ENCODE measurements at regions of chr11 and their contacts with region 1.

Region 1: DNA sequence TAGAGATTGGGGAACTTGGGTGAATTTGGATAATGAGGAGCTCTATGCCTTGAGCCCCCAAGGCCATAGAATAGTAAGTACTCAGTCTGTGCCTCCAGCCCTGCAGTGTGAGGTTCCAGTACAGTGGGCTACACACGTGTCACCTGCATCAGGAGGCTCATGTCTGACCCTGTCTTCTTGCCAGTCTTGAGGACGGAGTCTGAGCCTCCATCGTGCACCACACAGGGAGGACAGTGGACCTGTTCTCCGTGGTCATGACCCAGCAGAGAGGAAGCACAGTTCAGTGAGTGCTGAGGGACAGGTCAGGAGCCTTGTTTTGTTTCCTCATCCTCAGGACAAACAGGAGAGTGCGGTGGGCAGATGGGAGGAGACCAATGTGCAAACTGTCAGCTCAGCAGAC is 30.8 kb downstream of the RPS13 start:
- DNase-seq: no peak
- H3K4me3 ChIP-seq: no peak overlapping the region
- H3K27ac ChIP-seq: no peak overlapping the region
- H3K4me1 ChIP-seq: no peaks in the 10 kb centered on the region
- H3K27me3 ChIP-seq: peaks cover 4% of the 10 kb centered on the region
- CTCF ChIP-seq: no peak

Region 2: GRCh38 chr11:16831316-16832192 is 215.1 kb before region 1 on chr11:
- intact Hi-C with region 1: loop called (anchors 5 kb)
- DNase-seq: no peak
- H3K4me3 ChIP-seq: no peak overlapping the region
- H3K27ac ChIP-seq: no peak overlapping the region
- H3K4me1 ChIP-seq: peaks cover 7% of the 10 kb centered on the region
- H3K27me3 ChIP-seq: no peaks in the 10 kb centered on the region
- CTCF ChIP-seq: no peak

Region 3: GRCh38 chr11:17154409-17155159 is 107.9 kb after region 1 on chr11:
- intact Hi-C with region 1: no loop called
- DNase-seq: no peak
- H3K4me3 ChIP-seq: no peak overlapping the region
- H3K27ac ChIP-seq: peak overlapping the region; percentile 53
- H3K4me1 ChIP-seq: peaks cover 83% of the 10 kb centered on the region
- H3K27me3 ChIP-seq: no peaks in the 10 kb centered on the region
- CTCF ChIP-seq: no peak